ENCODE measurements at regions of chr19 and their contacts with region 1.

Region 1: GRCh38 chr19:45164577-45165335 is 4.0 kb upstream of the NKPD1 start:
- DNase-seq: peak; percentile 89
- H3K4me3 Mint-ChIP-seq: no peak overlapping the region
- H3K27ac Mint-ChIP-seq: peak overlapping the region; percentile 20
- H3K4me1 Mint-ChIP-seq: peaks cover 16% of the 10 kb centered on the region
- H3K27me3 Mint-ChIP-seq: peaks cover 4% of the 10 kb centered on the region

Region 2: DNA sequence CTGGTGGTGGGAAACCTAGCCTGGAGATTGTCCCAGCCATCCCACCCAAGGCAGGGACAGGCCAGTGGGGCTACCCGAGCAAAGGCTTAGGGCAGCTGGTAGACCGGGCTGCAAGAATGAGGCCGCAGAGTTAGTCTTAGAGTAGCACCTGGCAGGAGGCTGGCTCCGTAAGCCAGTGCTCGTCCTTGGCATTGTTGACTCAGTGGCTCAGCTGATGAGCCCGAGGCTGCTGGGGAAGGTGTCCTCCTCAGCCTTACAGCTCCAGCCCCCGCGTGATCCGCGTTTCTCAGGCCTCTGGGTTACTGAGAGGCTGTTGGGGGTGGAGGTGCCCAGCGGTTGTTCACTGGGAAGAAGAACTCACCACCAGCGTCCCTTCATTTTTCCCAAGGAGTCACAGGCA is 47.1 kb before region 1 on chr19:
- intact Hi-C with region 1: loop called (anchors 5 kb)
- DNase-seq: no peak
- H3K4me3 Mint-ChIP-seq: no peak overlapping the region
- H3K27ac Mint-ChIP-seq: peak overlapping the region; percentile 58
- H3K4me1 Mint-ChIP-seq: peaks cover 49% of the 10 kb centered on the region
- H3K27me3 Mint-ChIP-seq: no peaks in the 10 kb centered on the region